AG04450 (cell line): ENCODE measurements at regions of chr12 and their contacts with region 1.

Region 1: DNA sequence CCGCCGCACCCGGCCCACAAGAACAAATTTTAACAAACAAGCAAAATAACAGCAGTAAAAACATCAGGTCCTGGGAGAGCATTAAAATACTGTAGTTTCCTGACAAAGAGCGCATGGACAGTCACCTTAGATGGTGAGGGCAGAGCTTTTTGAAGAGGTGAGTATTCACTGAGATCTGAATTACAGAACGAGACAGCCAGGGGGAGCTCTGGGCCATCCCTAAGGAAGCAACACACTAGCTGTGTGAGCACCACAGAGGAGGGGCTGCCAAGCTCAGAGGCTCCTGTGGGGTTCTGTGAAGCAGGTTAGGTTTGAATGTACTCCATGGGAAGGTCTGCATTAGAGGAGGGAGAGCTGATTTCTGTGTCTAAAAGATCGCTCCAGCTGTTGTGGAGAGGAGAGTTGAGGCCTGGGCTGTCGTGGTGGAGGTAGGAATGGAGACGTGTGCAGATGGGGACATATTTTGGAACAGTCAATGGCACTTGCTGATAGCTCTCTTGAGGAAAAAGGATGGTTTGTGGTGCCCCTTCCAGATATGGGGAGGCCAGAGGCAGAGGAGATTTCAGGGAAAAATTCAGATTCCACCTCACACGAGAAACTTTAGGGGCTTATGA is 72.9 kb downstream of the TRAFD1 start:
- DNase-seq: no peak
- H3K4me3 ChIP-seq: no peak overlapping the region
- H3K27ac ChIP-seq: no peak overlapping the region
- H3K27me3 ChIP-seq: no peaks in the 10 kb centered on the region
- CTCF ChIP-seq: peak; percentile 73

Region 2: DNA sequence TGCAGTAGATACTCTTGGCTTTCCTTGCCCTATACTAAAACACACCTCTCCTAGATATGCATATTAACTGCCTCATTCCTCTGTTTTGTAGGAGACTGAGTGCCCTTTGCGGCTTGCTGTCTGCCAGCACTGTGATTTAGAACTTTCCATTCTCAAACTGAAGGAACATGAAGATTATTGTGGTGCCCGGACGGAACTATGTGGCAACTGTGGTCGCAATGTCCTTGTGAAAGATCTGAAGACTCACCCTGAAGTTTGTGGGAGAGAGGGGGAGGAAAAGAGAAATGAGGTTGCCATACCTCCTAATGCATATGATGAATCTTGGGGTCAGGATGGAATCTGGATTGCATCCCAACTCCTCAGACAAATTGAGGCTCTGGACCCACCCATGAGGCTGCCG is 57.5 kb before region 1 on chr12:
- CTCF ChIA-PET with region 1: no interaction called
- POLR2A ChIA-PET with region 1: no interaction called
- DNase-seq: no peak
- H3K4me3 ChIP-seq: no peak overlapping the region
- H3K27ac ChIP-seq: no peak overlapping the region
- H3K27me3 ChIP-seq: no peaks in the 10 kb centered on the region
- CTCF ChIP-seq: no peak

Region 3: GRCh38 chr12:112185093-112185923 is 12.9 kb before region 1 on chr12:
- CTCF ChIA-PET with region 1: interaction called, 26 read pairs
- POLR2A ChIA-PET with region 1: no interaction called
- DNase-seq: no peak
- H3K4me3 ChIP-seq: no peak overlapping the region
- H3K27ac ChIP-seq: no peak overlapping the region
- H3K27me3 ChIP-seq: no peaks in the 10 kb centered on the region
- CTCF ChIP-seq: no peak

Region 4: GRCh38 chr12:112214064-112214463 is 15.8 kb after region 1 on chr12:
- CTCF ChIA-PET with region 1: interaction called, 12 read pairs
- POLR2A ChIA-PET with region 1: no interaction called
- DNase-seq: no peak
- H3K4me3 ChIP-seq: no peak overlapping the region
- H3K27ac ChIP-seq: no peak overlapping the region
- H3K27me3 ChIP-seq: no peaks in the 10 kb centered on the region
- CTCF ChIP-seq: no peak

Region 5: GRCh38 chr12:112382232-112382796 is 184.1 kb after region 1 on chr12 and contains the start of gene HECTD4:
- CTCF ChIA-PET with region 1: interaction called, 79 read pairs
- POLR2A ChIA-PET with region 1: interaction called, 4 read pairs
- DNase-seq: peak; percentile 33
- H3K4me3 ChIP-seq: peak within 1 kb of the TSS; percentile 74
- H3K27ac ChIP-seq: peak within 1 kb of the TSS; percentile 57
- H3K27me3 ChIP-seq: no peaks in the 10 kb centered on the region
- CTCF ChIP-seq: no peak
- polyA plus RNA-seq, gene HECTD4: 8.6 and 9.5 TPM in 2 replicates

Region 6: GRCh38 chr12:112409906-112410244 is 211.6 kb after region 1 on chr12:
- CTCF ChIA-PET with region 1: interaction called, 19 read pairs
- POLR2A ChIA-PET with region 1: no interaction called
- DNase-seq: no peak
- H3K4me3 ChIP-seq: no peak overlapping the region
- H3K27ac ChIP-seq: no peak overlapping the region
- H3K27me3 ChIP-seq: no peaks in the 10 kb centered on the region
- CTCF ChIP-seq: no peak

Region 7: GRCh38 chr12:113537751-113538087 is 1339.5 kb after region 1 on chr12:
- CTCF ChIA-PET with region 1: no interaction called
- POLR2A ChIA-PET with region 1: no interaction called
- DNase-seq: no peak
- H3K4me3 ChIP-seq: no peak overlapping the region
- H3K27ac ChIP-seq: no peak overlapping the region
- H3K27me3 ChIP-seq: no peaks in the 10 kb centered on the region
- CTCF ChIP-seq: no peak